Activated naive CD4-positive, alpha-beta T cell treated with anti-CD3 and anti-CD28 coated beads for 36 hours (primary cell): ENCODE measurements at regions of chr17 and their contacts with region 1.

Region 1: GRCh38 chr17:59361916-59362810 is 30.7 kb downstream of the YPEL2 start:
- DNase-seq: peak; percentile 60
- H3K4me3 Mint-ChIP-seq: peak overlapping the region; percentile 8
- H3K27ac Mint-ChIP-seq: peak overlapping the region; percentile 73
- H3K4me1 Mint-ChIP-seq: peaks cover 78% of the 10 kb centered on the region
- H3K27me3 Mint-ChIP-seq: no peaks in the 10 kb centered on the region

Region 2: DNA sequence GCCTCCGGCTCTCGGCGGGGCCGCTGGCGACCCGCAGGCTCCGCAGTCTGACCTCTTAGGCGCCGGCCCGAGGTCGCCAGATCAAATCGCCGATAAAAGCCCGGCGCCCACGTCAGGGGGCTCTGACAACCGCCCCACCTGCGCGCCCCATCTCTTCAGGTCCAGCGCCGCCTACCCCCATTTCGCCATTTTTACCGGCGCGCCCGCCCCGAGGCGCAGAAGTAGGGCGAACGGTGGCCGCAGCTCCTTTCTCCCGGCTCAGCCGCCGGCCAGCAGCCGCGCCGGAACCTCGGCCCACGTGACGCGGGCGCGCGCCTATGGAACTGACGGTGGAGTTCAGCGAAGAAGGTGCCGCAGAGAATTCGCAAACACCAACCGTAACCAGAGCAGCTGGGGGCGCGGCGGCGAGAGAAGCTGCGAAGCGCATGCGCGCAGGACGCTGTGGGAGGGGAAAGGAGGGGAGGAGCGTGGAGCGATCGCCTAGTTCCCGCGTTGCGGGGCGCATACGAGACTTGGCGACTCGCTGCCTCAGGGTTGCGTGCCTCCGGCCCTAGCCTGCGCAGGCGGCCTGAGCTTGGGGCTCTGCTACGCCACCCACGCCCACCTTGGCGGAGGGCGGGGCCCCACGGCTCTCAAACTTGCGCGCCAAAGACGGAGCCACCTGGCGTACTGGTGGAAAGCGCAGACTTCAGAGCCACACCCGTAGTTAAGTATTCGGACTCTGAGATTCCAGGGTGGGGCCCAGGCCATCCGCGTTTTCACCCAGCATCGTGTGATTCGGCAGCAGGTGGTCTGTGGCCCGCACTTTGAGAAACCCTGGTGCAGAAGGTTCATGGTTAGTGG is 255.5 kb before region 1 on chr17 and contains the start of gene TRIM37:
- CTCF ChIA-PET with region 1: no interaction called
- intact Hi-C with region 1: loop called (anchors 5 kb)
- DNase-seq: peak; percentile 99
- H3K4me3 Mint-ChIP-seq: peak within 1 kb of the TSS; percentile 96
- H3K27ac Mint-ChIP-seq: peak within 1 kb of the TSS; percentile 89
- H3K4me1 Mint-ChIP-seq: peaks cover 54% of the 10 kb centered on the region
- H3K27me3 Mint-ChIP-seq: no peaks in the 10 kb centered on the region
- total RNA-seq, gene TRIM37: 19.9 to 24.1 TPM

Region 3: DNA sequence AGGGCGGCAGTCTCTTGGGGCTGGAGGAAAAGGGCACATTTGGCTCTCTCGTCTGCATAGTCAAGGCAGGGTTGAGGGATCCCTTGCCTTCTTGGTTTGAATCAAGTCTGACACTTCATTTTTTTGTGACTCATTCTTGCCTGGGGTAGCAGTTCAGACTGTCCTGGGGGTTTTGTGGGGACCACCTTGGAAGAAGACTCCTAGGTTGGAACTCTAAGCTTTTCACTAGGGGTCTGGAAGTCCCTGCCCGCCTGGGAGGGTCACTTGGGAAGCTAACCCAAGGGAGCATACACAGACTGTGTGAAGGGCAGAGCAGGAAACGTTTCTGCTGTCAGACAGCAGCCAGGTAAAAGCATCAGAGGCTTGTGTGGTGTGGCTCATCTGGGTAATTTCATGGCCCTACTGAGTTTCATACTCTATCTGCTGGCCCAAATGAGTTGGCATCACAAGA is 19.5 kb before region 1 on chr17:
- CTCF ChIA-PET with region 1: interaction called, 4 read pairs
- intact Hi-C with region 1: loop called (anchors 1 kb)
- DNase-seq: peak; percentile 55
- H3K4me3 Mint-ChIP-seq: no peak overlapping the region
- H3K27ac Mint-ChIP-seq: peak overlapping the region; percentile 28
- H3K4me1 Mint-ChIP-seq: peaks cover 40% of the 10 kb centered on the region
- H3K27me3 Mint-ChIP-seq: no peaks in the 10 kb centered on the region

Region 4: GRCh38 chr17:59427425-59427921 is 65.3 kb after region 1 on chr17:
- CTCF ChIA-PET with region 1: interaction called, 9 read pairs
- intact Hi-C with region 1: loop called (anchors 2 kb)
- DNase-seq: peak; percentile 83
- H3K4me3 Mint-ChIP-seq: no peak overlapping the region
- H3K27ac Mint-ChIP-seq: no peak overlapping the region
- H3K4me1 Mint-ChIP-seq: peaks cover 15% of the 10 kb centered on the region
- H3K27me3 Mint-ChIP-seq: no peaks in the 10 kb centered on the region

Region 5: GRCh38 chr17:59440784-59441441 is 78.8 kb after region 1 on chr17:
- CTCF ChIA-PET with region 1: interaction called, 10 read pairs
- intact Hi-C with region 1: no loop called
- DNase-seq: peak; percentile 96
- H3K4me3 Mint-ChIP-seq: peak overlapping the region; percentile 58
- H3K27ac Mint-ChIP-seq: peak overlapping the region; percentile 88
- H3K4me1 Mint-ChIP-seq: peaks cover 37% of the 10 kb centered on the region
- H3K27me3 Mint-ChIP-seq: no peaks in the 10 kb centered on the region